ENCODE measurements at regions of chr1 and their contacts with region 1.

Region 1: GRCh38 chr1:200979574-200980451 is 43.7 kb downstream of the KIF21B start:
- DNase-seq: peak; percentile 71
- H3K4me3 Mint-ChIP-seq: no peak overlapping the region
- H3K27ac Mint-ChIP-seq: no peak overlapping the region
- H3K4me1 Mint-ChIP-seq: no peaks in the 10 kb centered on the region
- H3K27me3 Mint-ChIP-seq: no peaks in the 10 kb centered on the region

Region 2: GRCh38 chr1:200724064-200724463 is 255.7 kb before region 1 on chr1:
- CTCF ChIA-PET with region 1: no interaction called
- POLR2A ChIA-PET with region 1: no interaction called
- DNase-seq: no peak
- H3K4me3 Mint-ChIP-seq: no peak overlapping the region
- H3K27ac Mint-ChIP-seq: no peak overlapping the region
- H3K4me1 Mint-ChIP-seq: no peaks in the 10 kb centered on the region
- H3K27me3 Mint-ChIP-seq: peaks cover 10% of the 10 kb centered on the region

Region 3: DNA sequence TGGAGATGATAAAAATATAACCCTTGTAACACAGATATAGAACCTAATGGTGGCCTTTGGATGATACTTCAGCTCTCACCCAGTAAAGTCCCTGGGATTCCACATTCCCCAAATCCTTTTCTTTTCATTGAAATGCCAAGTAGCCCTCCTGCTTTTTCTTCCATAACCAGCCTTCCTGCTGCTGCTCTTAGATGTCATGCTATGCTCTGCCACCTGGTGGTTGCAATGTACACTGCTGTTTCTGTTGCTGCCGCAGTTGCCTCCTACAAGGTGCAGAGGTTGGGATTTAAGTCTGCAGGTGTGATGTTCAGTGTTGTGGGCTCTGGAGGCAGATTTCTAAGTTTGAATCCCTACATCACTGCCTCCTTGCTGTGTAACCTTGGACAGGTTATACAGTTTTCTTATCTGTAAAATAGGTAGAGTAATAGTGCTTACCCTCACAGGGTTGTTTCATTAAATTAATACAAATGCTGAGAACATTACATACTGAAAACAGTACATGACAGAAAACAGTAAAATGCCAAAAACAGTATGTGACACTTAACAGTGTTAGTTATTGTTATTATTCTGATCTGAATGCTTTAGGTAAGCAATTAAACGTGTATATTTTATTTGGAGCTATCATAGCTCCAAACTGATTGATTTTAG is 176.8 kb before region 1 on chr1:
- CTCF ChIA-PET with region 1: no interaction called
- POLR2A ChIA-PET with region 1: no interaction called
- DNase-seq: peak; percentile 75
- H3K4me3 Mint-ChIP-seq: no peak overlapping the region
- H3K27ac Mint-ChIP-seq: no peak overlapping the region
- H3K4me1 Mint-ChIP-seq: no peaks in the 10 kb centered on the region
- H3K27me3 Mint-ChIP-seq: peaks cover 21% of the 10 kb centered on the region

Region 4: DNA sequence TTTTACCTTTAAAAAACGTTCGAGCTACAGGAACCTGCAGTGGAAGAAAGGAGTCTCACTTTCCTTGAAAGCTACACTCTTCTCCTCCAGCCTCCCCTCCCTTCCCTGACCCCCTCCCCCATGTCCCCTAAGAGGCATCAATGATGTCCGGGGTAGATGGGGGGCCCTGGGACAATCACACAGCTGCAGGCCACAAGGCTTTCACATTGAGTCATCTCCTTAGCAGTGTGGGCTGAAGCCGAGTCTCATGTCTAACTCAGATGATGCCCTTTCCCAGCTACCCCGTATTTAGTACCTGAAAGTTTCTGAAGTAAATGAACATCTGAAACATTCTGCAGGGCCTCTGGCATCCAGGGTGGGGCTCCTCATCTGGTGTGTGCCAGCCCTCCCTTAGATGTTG is 113.3 kb before region 1 on chr1:
- CTCF ChIA-PET with region 1: no interaction called
- POLR2A ChIA-PET with region 1: no interaction called
- DNase-seq: peak; percentile 56
- H3K4me3 Mint-ChIP-seq: no peak overlapping the region
- H3K27ac Mint-ChIP-seq: no peak overlapping the region
- H3K4me1 Mint-ChIP-seq: peaks cover 64% of the 10 kb centered on the region
- H3K27me3 Mint-ChIP-seq: peaks cover 39% of the 10 kb centered on the region

Region 5: GRCh38 chr1:201023517-201023902 is 43.7 kb after region 1 on chr1 and contains the start of gene KIF21B:
- CTCF ChIA-PET with region 1: interaction called, 91 read pairs
- POLR2A ChIA-PET with region 1: interaction called, 8 read pairs
- DNase-seq: peak; percentile 94
- H3K4me3 Mint-ChIP-seq: peak within 1 kb of the TSS; percentile 96
- H3K27ac Mint-ChIP-seq: peak within 1 kb of the TSS; percentile 99
- H3K4me1 Mint-ChIP-seq: peaks cover 73% of the 10 kb centered on the region
- H3K27me3 Mint-ChIP-seq: no peaks in the 10 kb centered on the region
- total RNA-seq, gene KIF21B: 175 to 180 TPM

Region 6: DNA sequence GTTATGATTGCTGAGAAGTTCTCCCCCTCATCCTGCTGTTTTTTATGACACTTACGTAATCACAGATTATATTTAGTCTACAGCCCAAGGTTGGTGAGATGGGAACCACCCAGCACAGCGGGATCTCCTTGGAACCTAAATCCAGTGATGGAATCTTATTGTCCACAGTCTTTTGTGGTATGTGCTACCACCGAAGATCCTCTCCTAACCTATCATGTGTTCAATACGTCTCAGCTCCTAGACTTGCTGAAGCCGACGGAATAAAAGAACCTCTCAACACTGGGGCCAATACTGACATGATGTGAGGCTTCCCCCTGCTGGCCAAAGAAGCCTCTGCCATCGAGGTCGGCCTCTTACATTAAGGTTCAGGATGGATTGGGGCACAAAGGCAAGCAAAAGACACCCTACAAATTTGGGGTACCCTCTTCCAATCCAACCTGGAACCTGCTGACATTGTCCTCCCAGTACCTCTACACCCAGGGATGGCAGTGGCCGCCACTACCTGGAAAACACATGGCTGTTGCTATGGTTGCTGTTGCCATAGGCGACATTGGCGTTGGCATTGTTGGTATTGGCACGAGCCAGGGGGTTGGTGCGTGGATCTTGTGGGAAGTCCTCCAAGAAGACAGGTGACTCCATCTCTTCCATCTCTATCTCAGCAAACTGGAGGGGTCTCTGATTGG is 63.1 kb after region 1 on chr1:
- CTCF ChIA-PET with region 1: interaction called, 76 read pairs
- POLR2A ChIA-PET with region 1: interaction called, 3 read pairs
- DNase-seq: peak; percentile 76
- H3K4me3 Mint-ChIP-seq: no peak overlapping the region
- H3K27ac Mint-ChIP-seq: no peak overlapping the region
- H3K4me1 Mint-ChIP-seq: no peaks in the 10 kb centered on the region
- H3K27me3 Mint-ChIP-seq: peaks cover 15% of the 10 kb centered on the region

Region 7: DNA sequence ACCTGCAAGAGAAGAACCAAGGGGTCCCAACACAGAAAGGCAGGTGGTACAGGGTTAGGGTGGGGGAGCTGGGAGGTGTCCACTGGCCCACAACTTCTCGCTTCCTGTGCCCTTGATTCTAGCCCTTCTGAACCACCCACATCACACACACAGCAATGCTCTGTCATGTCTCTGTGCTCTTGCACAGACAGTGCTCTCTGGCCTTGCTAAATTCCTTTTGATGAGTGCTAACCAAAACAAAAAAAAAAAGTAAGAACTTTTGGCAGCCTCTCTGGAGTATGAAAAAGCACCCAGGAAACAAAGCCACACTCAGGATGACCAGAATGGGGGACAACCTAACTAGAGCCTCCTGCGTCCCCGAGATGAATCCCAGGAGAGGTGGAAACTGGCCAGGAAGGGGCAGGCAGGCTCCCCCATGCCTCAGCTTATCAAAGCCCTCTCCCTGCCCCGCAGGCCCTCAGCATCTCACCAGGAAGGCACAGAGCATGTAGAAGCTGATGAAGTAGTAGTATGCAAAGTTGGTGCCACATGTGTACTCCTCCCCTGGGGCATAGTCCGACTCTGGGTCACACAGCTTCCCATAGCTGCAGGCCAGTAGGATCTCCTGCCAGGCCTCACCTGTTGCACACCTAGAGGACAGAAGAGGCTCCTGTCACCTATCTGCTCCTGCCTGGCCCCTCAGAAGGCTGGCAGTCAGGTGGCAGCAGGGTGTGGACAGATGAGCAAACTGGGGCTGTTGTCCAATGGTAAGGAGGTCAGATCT is 70.9 kb after region 1 on chr1:
- CTCF ChIA-PET with region 1: interaction called, 12 read pairs
- POLR2A ChIA-PET with region 1: no interaction called
- DNase-seq: no peak
- H3K4me3 Mint-ChIP-seq: no peak overlapping the region
- H3K27ac Mint-ChIP-seq: no peak overlapping the region
- H3K4me1 Mint-ChIP-seq: no peaks in the 10 kb centered on the region
- H3K27me3 Mint-ChIP-seq: peaks cover 13% of the 10 kb centered on the region

Region 8: DNA sequence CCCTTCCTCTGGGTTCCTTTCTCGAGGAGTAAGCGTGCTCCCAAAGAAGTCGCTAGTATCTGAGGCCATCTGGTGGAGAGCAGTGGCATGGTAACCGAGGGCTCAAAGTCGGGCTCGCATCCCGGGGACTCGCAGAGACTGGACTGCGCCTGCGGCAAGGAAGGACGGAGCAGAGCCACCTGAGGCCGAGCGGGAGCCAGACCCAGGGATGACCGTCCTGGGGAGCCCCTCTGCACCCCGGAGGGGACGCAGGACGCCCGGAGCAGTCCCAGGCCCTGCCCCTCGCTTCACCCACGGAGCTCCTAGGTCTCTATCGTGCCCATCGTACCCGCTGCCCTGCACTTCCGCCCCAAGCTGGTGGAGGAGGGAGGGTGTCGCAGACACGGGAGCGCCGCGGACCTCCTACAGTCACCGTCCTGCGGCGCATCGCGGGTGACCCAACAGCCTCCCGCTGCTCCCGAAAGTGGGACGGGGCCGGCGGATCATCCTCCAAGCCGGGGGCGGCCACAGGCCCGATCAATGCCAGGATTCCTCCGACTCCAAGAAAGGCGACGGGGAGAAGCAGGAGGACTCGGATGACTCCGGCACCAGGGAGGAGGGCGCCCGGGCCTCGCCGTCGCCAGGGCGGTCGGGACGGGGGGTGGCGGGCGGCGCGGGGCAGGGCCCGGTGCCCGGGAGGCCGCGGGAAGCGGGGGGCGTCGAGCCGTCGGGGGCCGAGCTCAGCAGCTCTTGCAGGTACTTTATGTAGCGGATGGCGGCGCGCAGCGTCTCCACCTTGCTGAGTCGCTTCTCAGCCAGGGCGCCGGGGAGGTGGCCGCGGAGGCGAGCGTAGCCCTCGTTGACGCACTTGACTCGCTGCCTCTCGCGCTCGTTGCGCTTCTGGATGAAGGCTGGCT is 134.7 kb after region 1 on chr1:
- CTCF ChIA-PET with region 1: interaction called, 19 read pairs
- POLR2A ChIA-PET with region 1: no interaction called
- DNase-seq: peak; percentile 76
- H3K4me3 Mint-ChIP-seq: peak overlapping the region; percentile 77
- H3K27ac Mint-ChIP-seq: no peak overlapping the region
- H3K4me1 Mint-ChIP-seq: peaks cover 6% of the 10 kb centered on the region
- H3K27me3 Mint-ChIP-seq: peaks cover 28% of the 10 kb centered on the region

Measured in activated CD4-positive, alpha-beta memory T cell treated with anti-CD3 and anti-CD28 coated beads, Interleukin-2, amount 10 ng/mL, durations not matched to agents 7 days and 5 days (primary cell).